ENCODE measurements at regions of chr7 and their contacts with region 1.

Region 1: GRCh38 chr7:13717031-13717430 is 272.4 kb downstream of the ETV1 start:
- DNase-seq: no peak
- CTCF ChIP-seq: no peak

Region 2: DNA sequence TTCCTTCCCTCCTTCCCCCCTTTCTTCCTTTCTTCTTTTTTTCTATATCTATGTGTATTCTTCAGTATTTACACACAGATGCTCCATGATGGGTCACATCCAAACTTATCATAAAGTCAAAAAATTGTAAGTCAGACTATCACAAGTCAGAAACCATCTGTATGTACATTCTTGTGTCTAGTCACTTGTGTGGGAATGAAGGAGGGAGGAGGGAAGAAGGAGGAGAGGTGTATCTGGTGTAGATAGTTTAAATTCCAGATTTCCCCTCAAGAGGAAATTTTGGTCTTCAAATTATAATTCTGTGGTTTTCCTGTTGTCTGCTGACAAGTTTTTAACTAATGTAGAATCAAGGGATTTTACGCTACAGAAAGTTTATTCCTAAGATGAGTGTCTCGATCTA is 14.8 kb before region 1 on chr7:
- CTCF ChIA-PET with region 1: interaction called, 17 read pairs
- POLR2A ChIA-PET with region 1: interaction called, 11 read pairs
- DNase-seq: no peak
- CTCF ChIP-seq: no peak

Region 3: GRCh38 chr7:13742811-13743210 is 25.8 kb after region 1 on chr7:
- CTCF ChIA-PET with region 1: no interaction called
- POLR2A ChIA-PET with region 1: no interaction called
- DNase-seq: no peak
- CTCF ChIP-seq: peak; percentile 38